Naive thymus-derived CD4-positive, alpha-beta T cell (primary cell): ENCODE measurements at regions of chr22 and their contacts with region 1.

Region 1: DNA sequence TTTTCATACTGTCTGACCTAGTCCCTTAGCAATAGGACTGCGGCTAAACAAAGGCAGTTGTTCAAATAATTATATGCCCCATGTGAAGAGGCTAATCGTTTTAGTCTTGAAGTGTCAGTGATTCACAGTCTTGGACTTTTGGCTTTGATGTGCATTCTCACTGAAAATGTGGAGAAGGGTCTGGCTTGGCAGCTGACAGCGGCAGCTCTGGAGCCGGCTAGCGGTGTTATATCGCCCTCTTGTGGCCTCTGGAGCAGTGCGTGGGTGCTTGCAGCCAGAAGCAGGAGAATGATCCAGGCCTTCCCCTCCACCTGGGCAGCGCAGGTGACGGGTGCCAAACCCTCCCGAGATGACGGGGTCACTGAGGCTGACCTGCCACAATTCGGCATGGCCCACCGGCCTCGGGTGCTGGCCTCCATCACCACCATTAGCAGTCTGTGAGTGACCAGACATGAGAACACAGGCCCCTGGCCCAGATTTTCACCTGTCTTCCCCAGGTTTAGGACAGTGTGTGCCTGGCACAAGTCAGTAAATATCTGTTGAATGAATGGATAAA is 90.3 kb upstream of the PITPNB start:
- DNase-seq: peak; percentile 51 to 78 (median 60)
- ATAC-seq: peak; percentile 84
- H3K4me3 ChIP-seq: no peak overlapping the region
- H3K4me3 Mint-ChIP-seq: no peak overlapping the region
- H3K27ac ChIP-seq: no peak overlapping the region
- H3K27ac Mint-ChIP-seq: no peak overlapping the region
- H3K4me1 ChIP-seq: no peaks in the 10 kb centered on the region
- H3K4me1 Mint-ChIP-seq: peaks cover 0 to 1% (median 0%) of the 10 kb centered on the region in 7 donors
- H3K27me3 ChIP-seq: no peaks in the 10 kb centered on the region
- H3K27me3 Mint-ChIP-seq: no peaks in the 10 kb centered on the region

Region 2: DNA sequence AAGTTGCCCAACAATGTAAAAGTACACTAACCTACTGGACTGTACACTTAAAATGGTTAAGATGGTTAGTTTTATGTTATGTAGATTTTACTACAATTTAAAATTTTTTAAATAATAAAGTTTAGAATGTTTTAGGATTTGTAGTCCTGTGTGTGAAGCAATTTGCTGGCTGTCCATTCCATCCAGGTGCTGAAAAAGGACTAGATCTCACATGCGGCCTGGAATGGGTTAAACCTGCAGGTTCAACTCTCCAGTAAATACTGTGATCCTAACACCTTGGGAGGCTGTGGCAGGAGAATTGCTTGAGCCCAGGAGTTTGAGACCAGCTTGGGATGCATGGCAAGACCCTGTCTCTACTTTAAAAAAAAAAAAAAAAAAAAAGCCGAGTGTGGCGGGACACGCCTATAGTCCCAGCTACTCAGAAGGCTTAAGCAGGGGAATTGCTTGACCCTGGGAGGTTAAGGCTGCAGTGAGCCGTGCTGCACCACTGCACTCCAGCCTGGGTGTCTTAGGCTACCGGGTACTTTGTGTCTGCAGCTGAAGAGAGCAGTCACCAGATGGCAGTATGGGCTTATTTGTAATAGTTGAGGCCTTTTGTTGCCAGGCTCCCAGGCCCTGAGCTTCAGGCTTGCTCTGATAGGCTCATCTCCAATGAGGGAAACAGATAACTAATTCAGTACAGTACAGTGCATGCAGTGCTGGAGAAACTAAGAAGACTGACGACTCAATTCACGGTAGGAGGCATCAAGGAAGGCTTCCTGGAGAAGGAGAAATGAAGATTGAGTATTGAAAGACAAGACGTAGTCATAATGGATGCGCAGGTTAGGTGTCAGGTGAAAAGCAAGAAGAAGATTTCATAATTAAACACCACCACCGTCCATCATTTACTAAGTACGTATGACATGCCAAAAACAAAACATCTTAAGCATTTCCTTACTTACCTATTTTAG is 1645.0 kb before region 1 on chr22:
- CTCF ChIA-PET with region 1: no interaction called
- POLR2A ChIA-PET with region 1: no interaction called
- intact Hi-C with region 1: loop called in 1 of 2 experiments (anchors 5 kb)
- DNase-seq: peak in 8 of 9 donors; percentile 33 to 56 (median 47)
- ATAC-seq: peak; percentile 84
- H3K4me3 ChIP-seq: no peak overlapping the region
- H3K4me3 Mint-ChIP-seq: no peak overlapping the region
- H3K27ac ChIP-seq: no peak overlapping the region
- H3K27ac Mint-ChIP-seq: no peak overlapping the region
- H3K4me1 ChIP-seq: no peaks in the 10 kb centered on the region
- H3K4me1 Mint-ChIP-seq: peaks cover 4 to 13% (median 6%) of the 10 kb centered on the region in 7 donors
- H3K27me3 ChIP-seq: peaks cover 0 to 3% of the 10 kb centered on the region in 2 donors
- H3K27me3 Mint-ChIP-seq: peaks cover 7 to 18% (median 12%) of the 10 kb centered on the region in 5 donors

Region 3: DNA sequence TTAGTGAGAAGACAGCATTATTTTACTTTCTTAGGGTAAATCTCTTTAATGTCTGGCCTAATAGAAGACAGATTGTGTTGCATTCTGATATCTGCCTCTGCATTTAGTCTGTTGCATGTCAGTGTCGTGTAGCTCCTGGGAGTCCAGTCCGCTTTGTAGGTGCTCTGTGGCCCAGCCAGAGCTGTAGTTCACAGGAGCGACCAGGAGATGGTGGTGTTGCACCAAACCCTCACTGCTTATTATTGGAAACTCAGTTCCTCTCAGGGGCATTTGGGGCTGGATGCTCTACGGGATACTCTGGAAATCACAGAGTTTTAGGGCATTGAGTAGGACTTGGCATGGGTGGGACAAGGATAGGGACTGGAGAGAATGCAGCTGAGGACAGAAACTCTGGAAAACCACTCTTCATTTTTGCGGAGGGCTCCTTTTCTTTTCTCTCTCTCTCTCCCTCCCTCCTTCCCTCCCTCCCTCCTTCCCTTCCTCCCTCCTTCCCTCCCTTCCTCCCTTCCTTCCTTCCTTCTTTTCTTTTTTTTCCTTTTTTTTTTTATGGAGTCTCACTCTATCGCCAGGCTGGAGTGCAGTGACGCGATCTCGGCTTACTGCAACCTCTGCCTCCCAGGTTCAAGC is 1330.2 kb before region 1 on chr22:
- CTCF ChIA-PET with region 1: no interaction called
- POLR2A ChIA-PET with region 1: no interaction called
- intact Hi-C with region 1: loop called in 1 of 2 experiments (anchors 2 kb)
- DNase-seq: peak; percentile 26 to 71 (median 50)
- ATAC-seq: peak; percentile 93
- H3K4me3 ChIP-seq: no peak overlapping the region
- H3K4me3 Mint-ChIP-seq: peak overlapping the region in 8 of 10 donors; percentile 42 to 66 (median 56)
- H3K27ac ChIP-seq: peak overlapping the region; percentile 5
- H3K27ac Mint-ChIP-seq: peak overlapping the region; percentile 20 to 99 (median 79)
- H3K4me1 ChIP-seq: peaks cover 37 to 47% of the 10 kb centered on the region in 2 donors
- H3K4me1 Mint-ChIP-seq: peaks cover 51 to 85% (median 74%) of the 10 kb centered on the region in 7 donors
- H3K27me3 ChIP-seq: no peaks in the 10 kb centered on the region
- H3K27me3 Mint-ChIP-seq: no peaks in the 10 kb centered on the region

Region 4: GRCh38 chr22:27880778-27881394 is 128.5 kb before region 1 on chr22:
- CTCF ChIA-PET with region 1: interaction called, 9 read pairs
- POLR2A ChIA-PET with region 1: no interaction called
- intact Hi-C with region 1: loop called (anchors 1 kb)
- DNase-seq: peak in 5 of 9 donors; percentile 26 to 38 (median 38)
- ATAC-seq: peak; percentile 76
- H3K4me3 ChIP-seq: no peak overlapping the region
- H3K4me3 Mint-ChIP-seq: no peak overlapping the region
- H3K27ac ChIP-seq: no peak overlapping the region
- H3K27ac Mint-ChIP-seq: peak overlapping the region in 2 of 9 donors; percentile 2 to 11
- H3K4me1 ChIP-seq: peaks cover 0 to 13% of the 10 kb centered on the region in 2 donors
- H3K4me1 Mint-ChIP-seq: peaks cover 2 to 37% (median 24%) of the 10 kb centered on the region in 7 donors
- H3K27me3 ChIP-seq: no peaks in the 10 kb centered on the region
- H3K27me3 Mint-ChIP-seq: no peaks in the 10 kb centered on the region

Region 5: GRCh38 chr22:27885977-27886842 is 123.1 kb before region 1 on chr22:
- CTCF ChIA-PET with region 1: interaction called, 9 read pairs
- POLR2A ChIA-PET with region 1: no interaction called
- intact Hi-C with region 1: loop called (anchors 1 kb)
- DNase-seq: peak in 7 of 9 donors; percentile 21 to 53 (median 36)
- ATAC-seq: peak; percentile 67
- H3K4me3 ChIP-seq: no peak overlapping the region
- H3K4me3 Mint-ChIP-seq: no peak overlapping the region
- H3K27ac ChIP-seq: no peak overlapping the region
- H3K27ac Mint-ChIP-seq: peak overlapping the region in 2 of 9 donors; percentile 18 to 33
- H3K4me1 ChIP-seq: no peaks in the 10 kb centered on the region
- H3K4me1 Mint-ChIP-seq: peaks cover 0 to 18% (median 6%) of the 10 kb centered on the region in 7 donors
- H3K27me3 ChIP-seq: no peaks in the 10 kb centered on the region
- H3K27me3 Mint-ChIP-seq: no peaks in the 10 kb centered on the region

Region 6: DNA sequence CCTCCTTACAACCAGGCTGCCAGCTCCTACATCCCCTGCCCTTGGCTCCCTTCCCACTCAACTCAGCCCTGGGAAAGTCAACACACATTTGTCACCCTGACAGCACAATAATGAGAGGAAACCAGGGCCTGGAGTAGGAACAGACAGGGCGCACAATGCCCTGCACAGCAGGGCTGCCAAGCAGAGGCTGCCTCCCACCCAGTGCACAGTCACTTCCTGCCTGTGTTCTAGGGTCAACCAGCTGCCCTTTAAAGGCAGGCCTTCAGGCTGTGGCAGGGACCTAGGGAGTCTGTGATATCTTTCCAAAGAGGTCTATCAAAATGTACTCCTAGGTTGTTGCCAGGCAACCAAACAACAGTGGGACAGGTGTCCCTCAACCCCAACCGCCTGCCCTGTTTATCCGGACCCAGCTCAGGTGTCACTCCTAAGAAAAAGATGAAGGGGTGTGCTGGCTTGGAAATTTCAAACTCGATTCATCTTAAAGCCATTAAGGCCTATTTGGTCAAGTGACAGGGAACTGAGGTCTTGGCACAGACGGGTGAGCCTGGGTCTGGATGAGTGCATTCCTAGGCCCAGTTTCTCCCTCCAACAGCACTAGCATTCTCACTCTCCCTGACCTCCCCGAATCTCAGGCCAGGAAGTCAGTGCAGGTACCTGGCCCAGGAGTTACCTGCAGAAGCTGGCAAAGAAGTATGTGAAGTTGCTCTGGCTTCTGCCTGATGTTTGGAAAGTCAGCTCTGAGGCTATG is 20.0 kb after region 1 on chr22:
- CTCF ChIA-PET with region 1: no interaction called
- POLR2A ChIA-PET with region 1: no interaction called
- intact Hi-C with region 1: no loop called
- DNase-seq: no peak
- ATAC-seq: no peak
- H3K4me3 ChIP-seq: no peak overlapping the region
- H3K4me3 Mint-ChIP-seq: no peak overlapping the region
- H3K27ac ChIP-seq: no peak overlapping the region
- H3K27ac Mint-ChIP-seq: no peak overlapping the region
- H3K4me1 ChIP-seq: no peaks in the 10 kb centered on the region
- H3K4me1 Mint-ChIP-seq: peaks cover 0 to 7% (median under 1%) of the 10 kb centered on the region in 7 donors
- H3K27me3 ChIP-seq: no peaks in the 10 kb centered on the region
- H3K27me3 Mint-ChIP-seq: peaks cover 0 to 5% (median 0%) of the 10 kb centered on the region in 5 donors